ENCODE measurements at regions of chr12 and their contacts with region 1.

Region 1: GRCh38 chr12:10153271-10154144 is 18.4 kb downstream of the OLR1 start:
- DNase-seq: peak; percentile 62
- H3K4me3 Mint-ChIP-seq: peak overlapping the region; percentile 81
- H3K27ac Mint-ChIP-seq: no peak overlapping the region
- H3K4me1 Mint-ChIP-seq: peaks cover 12% of the 10 kb centered on the region
- H3K27me3 Mint-ChIP-seq: peaks cover 26% of the 10 kb centered on the region

Region 2: DNA sequence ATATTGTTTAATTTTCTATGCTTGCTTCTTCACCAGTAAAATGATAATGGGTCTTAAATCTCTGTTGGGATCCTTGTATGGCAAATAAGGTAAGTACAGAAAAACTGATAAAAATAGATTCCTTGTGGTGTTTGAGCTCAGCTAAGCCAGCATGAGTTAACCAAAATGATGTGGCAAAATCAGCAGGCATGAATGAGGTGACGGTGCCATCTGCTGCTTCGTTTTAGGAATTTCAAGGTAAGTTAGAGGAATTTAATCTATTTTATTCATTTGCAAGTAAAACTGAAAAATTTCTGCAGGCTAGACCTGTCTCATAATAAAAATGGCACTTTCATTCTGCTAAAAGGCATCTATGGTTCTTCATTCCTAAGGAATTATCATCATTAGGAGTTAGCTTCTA is 13.5 kb before region 1 on chr12:
- CTCF ChIA-PET with region 1: interaction called, 10 read pairs
- POLR2A ChIA-PET with region 1: no interaction called
- intact Hi-C with region 1: no loop called
- DNase-seq: peak; percentile 66
- H3K4me3 Mint-ChIP-seq: no peak overlapping the region
- H3K27ac Mint-ChIP-seq: no peak overlapping the region
- H3K4me1 Mint-ChIP-seq: no peaks in the 10 kb centered on the region
- H3K27me3 Mint-ChIP-seq: peaks cover 8% of the 10 kb centered on the region

Region 3: DNA sequence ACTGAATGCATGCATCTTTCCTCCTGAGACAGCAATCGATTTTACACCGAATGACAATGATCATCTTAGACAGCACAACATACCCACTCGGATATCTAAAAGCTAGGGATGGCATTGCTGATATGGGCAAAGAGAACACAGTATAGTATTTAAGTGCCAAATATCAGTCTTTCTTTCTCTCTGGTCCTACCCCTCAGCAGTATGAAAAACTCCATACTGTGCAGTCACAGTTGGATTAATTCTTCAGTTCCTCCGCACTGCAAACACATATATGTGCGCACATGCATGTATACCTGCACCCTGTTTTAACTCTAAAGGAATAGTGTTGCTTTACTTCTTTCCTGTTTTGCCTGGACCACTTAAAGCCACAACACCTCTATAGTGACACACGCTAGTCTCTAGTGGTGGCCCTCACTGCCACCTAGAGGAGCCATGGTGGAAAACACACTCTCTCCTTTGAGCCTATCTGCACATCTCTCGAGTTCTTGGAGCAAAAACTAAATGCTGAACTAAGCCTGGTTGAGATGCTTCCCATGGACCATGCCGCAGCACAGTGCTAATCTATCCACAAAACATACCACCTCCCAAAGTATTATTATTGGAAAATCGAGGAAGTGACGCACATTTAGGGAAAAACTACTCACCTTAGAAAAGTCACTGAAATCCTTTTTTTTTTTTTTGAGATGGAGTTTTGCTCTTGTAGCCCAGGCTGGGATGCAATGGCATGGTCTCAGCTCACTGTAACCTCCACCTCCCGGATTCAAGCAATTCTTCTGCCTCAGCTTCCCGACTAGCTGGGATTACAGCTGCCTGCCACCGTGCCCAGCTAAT is 37.3 kb after region 1 on chr12:
- CTCF ChIA-PET with region 1: interaction called, 20 read pairs
- POLR2A ChIA-PET with region 1: no interaction called
- intact Hi-C with region 1: loop called (anchors 1 kb)
- DNase-seq: peak; percentile 65
- H3K4me3 Mint-ChIP-seq: no peak overlapping the region
- H3K27ac Mint-ChIP-seq: no peak overlapping the region
- H3K4me1 Mint-ChIP-seq: no peaks in the 10 kb centered on the region
- H3K27me3 Mint-ChIP-seq: peaks cover 16% of the 10 kb centered on the region

Region 4: GRCh38 chr12:10212201-10213131 is 59.0 kb after region 1 on chr12 and contains the start of gene GABARAPL1:
- CTCF ChIA-PET with region 1: interaction called, 7 read pairs
- POLR2A ChIA-PET with region 1: no interaction called
- intact Hi-C with region 1: loop called (anchors 2 kb)
- DNase-seq: peak; percentile 94
- H3K4me3 Mint-ChIP-seq: peak within 1 kb of the TSS; percentile 89
- H3K27ac Mint-ChIP-seq: peak within 1 kb of the TSS; percentile 78
- H3K4me1 Mint-ChIP-seq: peaks cover 21% of the 10 kb centered on the region
- H3K27me3 Mint-ChIP-seq: no peaks in the 10 kb centered on the region
- total RNA-seq, gene GABARAPL1: 7.2 to 8.9 TPM

Region 5: GRCh38 chr12:10540776-10541205 is 387.3 kb after region 1 on chr12:
- CTCF ChIA-PET with region 1: no interaction called
- POLR2A ChIA-PET with region 1: no interaction called
- intact Hi-C with region 1: loop called (anchors 2 kb)
- DNase-seq: no peak
- H3K4me3 Mint-ChIP-seq: no peak overlapping the region
- H3K27ac Mint-ChIP-seq: no peak overlapping the region
- H3K4me1 Mint-ChIP-seq: peaks cover 9% of the 10 kb centered on the region
- H3K27me3 Mint-ChIP-seq: peaks cover 39% of the 10 kb centered on the region